T-cell (primary cell): ENCODE measurements at regions of chr1 and their contacts with region 1.

Region 1: GRCh38 chr1:25232027-25232865 is at the start of gene SYF2:
- DNase-seq: peak; percentile 77 to 95 (median 88)
- ATAC-seq: peak; percentile 93 to 95 (median 94)
- H3K4me3 ChIP-seq: peak within 1 kb of the TSS; percentile 74 to 100
- H3K4me3 Mint-ChIP-seq: no peak within 1 kb of the TSS
- H3K27ac ChIP-seq: peak within 1 kb of the TSS; percentile 96
- H3K27ac Mint-ChIP-seq: no peak within 1 kb of the TSS
- H3K4me1 ChIP-seq: peaks cover 12 to 28% of the 10 kb centered on the region in 2 experiments
- H3K4me1 Mint-ChIP-seq: peaks cover 25 to 45% (median 38%) of the 10 kb centered on the region in 3 donors
- H3K27me3 ChIP-seq: no peaks in the 10 kb centered on the region
- H3K27me3 Mint-ChIP-seq: no peaks in the 10 kb centered on the region
- total RNA-seq, gene SYF2: 65.9 to 71.4 (median 68.6) TPM

Region 2: DNA sequence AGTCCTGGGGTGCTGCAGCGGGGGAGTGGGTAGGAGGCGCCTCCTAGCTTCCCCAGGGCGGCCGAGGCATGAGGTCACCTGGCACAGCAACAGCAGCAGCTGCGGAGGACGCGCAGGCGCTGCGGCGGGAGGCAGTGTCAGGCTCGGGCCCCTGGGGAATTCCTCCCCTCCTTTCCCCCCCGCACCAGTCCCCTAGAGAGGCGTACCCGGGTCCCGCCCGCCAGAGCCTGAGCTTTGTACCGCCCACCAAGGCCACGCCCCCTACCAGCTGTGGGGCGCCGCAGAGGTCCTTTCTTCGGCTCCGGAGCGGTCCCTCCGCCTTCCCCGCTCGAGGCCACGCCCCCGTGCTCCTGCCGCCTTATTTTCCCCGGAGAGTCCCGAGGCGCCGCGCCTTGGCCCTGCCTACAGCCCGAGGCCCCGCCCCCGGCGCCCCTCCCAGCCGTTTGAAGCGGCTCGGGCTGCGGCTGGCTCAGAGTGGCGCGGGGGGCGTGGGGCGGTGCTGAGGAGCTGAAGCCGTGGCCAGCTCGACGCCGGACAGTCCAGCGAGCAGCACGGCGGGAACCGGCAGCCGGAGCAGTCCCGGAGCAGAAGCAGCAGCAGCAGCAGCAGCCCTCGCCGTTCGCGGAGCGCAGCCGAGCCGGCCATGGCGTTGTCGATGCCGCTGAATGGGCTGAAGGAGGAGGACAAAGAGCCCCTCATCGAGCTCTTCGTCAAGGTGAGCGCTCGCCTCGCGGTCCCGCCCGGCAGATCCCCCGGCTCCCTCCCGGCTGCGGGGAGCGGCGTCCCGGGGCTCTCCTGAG is 487.1 kb before region 1 on chr1 and contains the start of gene CLIC4:
- CTCF ChIA-PET with region 1: no interaction called
- POLR2A ChIA-PET with region 1: no interaction called
- DNase-seq: peak; percentile 95 to 100 (median 97)
- ATAC-seq: peak; percentile 87 to 94 (median 92)
- H3K4me3 ChIP-seq: peak within 1 kb of the TSS; percentile 63 to 72
- H3K4me3 Mint-ChIP-seq: peak within 1 kb of the TSS; percentile 79 to 85 (median 82)
- H3K27ac ChIP-seq: peak within 1 kb of the TSS; percentile 29
- H3K27ac Mint-ChIP-seq: peak within 1 kb of the TSS in 1 of 2 donors; percentile 43
- H3K4me1 ChIP-seq: peaks cover 2 to 15% of the 10 kb centered on the region in 2 experiments
- H3K4me1 Mint-ChIP-seq: peaks cover 18 to 36% (median 21%) of the 10 kb centered on the region in 3 donors
- H3K27me3 ChIP-seq: peaks cover 0 to 4% of the 10 kb centered on the region in 2 experiments
- H3K27me3 Mint-ChIP-seq: peaks cover 9% of the 10 kb centered on the region in 2 donors
- total RNA-seq, gene CLIC4: 0.75 to 9.1 (median 5.5) TPM

Region 3: GRCh38 chr1:25198663-25199252 is 33.5 kb before region 1 on chr1:
- CTCF ChIA-PET with region 1: no interaction called
- POLR2A ChIA-PET with region 1: no interaction called
- DNase-seq: peak in 2 of 35 experiments; percentile 6 to 21
- ATAC-seq: peak; percentile 50 to 75 (median 66)
- H3K4me3 ChIP-seq: no peak overlapping the region
- H3K4me3 Mint-ChIP-seq: peak overlapping the region in 2 of 3 donors; percentile 3 to 52
- H3K27ac ChIP-seq: no peak overlapping the region
- H3K27ac Mint-ChIP-seq: peak overlapping the region; percentile 17 to 53
- H3K4me1 ChIP-seq: peaks cover 6 to 16% of the 10 kb centered on the region in 2 experiments
- H3K4me1 Mint-ChIP-seq: peaks cover 16 to 21% (median 18%) of the 10 kb centered on the region in 3 donors
- H3K27me3 ChIP-seq: peaks cover 0 to 28% of the 10 kb centered on the region in 2 experiments
- H3K27me3 Mint-ChIP-seq: peaks cover 0 to 6% of the 10 kb centered on the region in 2 donors

Region 4: DNA sequence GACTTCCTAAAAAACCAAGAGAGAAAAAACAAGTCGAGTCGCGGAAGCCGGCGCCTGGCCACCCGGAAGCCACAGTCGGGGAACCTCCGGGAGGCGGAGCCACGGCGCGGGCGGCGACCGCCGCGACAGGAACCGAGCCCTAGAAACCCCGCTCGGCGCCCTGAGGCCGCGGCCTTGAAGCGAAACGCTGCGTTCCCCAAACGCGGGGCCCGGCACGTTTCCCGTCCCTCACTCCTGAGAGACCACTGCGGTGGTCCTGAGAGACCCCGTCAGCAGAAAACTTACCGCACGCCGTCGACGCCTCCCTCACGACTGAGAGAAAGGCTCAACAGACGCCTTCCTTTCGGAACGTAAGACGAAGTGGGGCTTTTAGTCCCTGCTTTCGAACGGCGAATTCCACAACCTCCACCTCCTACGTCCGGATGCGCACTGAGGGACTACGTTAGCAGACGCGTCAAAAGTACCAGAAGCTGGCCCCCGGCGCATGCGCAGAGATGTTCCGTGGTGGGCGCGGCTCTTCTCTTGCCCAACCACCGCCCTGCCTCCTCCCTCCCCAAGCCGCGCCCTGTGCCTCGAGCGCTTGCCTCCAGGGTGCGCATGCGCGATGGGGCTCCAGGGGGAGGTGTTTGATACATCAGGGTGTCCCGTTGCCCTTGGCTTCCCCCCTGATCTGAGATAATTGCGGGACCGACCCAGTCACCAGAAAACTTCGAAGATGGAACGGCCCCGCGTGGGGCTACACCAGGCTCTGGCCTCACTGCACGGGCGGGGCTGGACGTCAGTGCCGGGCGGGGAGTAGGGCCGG is 15.0 kb after region 1 on chr1 and contains the start of gene RSRP1:
- CTCF ChIA-PET with region 1: interaction called in 1 of 2 experiments, 3 read pairs
- POLR2A ChIA-PET with region 1: interaction called, 10 to 37 read pairs
- DNase-seq: peak; percentile 98 to 100 (median 100)
- ATAC-seq: peak; percentile 83 to 90 (median 84)
- H3K4me3 ChIP-seq: peak within 1 kb of the TSS; percentile 95 to 99
- H3K4me3 Mint-ChIP-seq: peak within 1 kb of the TSS; percentile 96 to 98 (median 98)
- H3K27ac ChIP-seq: peak within 1 kb of the TSS; percentile 97
- H3K27ac Mint-ChIP-seq: peak within 1 kb of the TSS; percentile 99
- H3K4me1 ChIP-seq: peaks cover 31 to 33% of the 10 kb centered on the region in 2 experiments
- H3K4me1 Mint-ChIP-seq: peaks cover 49 to 54% (median 50%) of the 10 kb centered on the region in 3 donors
- H3K27me3 ChIP-seq: no peaks in the 10 kb centered on the region
- H3K27me3 Mint-ChIP-seq: no peaks in the 10 kb centered on the region
- total RNA-seq, gene RSRP1: 433 to 572 (median 461) TPM

Region 5: GRCh38 chr1:25786887-25787759 is 554.9 kb after region 1 on chr1:
- CTCF ChIA-PET with region 1: no interaction called
- POLR2A ChIA-PET with region 1: no interaction called
- DNase-seq: no peak
- ATAC-seq: no peak
- H3K4me3 ChIP-seq: no peak overlapping the region
- H3K4me3 Mint-ChIP-seq: no peak overlapping the region
- H3K27ac ChIP-seq: no peak overlapping the region
- H3K27ac Mint-ChIP-seq: peak overlapping the region; percentile 45 to 58
- H3K4me1 ChIP-seq: no peaks in the 10 kb centered on the region
- H3K4me1 Mint-ChIP-seq: peaks cover 0 to 16% (median 0%) of the 10 kb centered on the region in 3 donors
- H3K27me3 ChIP-seq: no peaks in the 10 kb centered on the region
- H3K27me3 Mint-ChIP-seq: no peaks in the 10 kb centered on the region